ENCODE measurements at regions of chr7 and their contacts with region 1.

Region 1: GRCh38 chr7:92669616-92670165 is 79.5 kb upstream of the FAM133B start:
- DNase-seq: no peak
- ATAC-seq: no peak
- H3K4me3 Mint-ChIP-seq: peak overlapping the region; percentile 32
- H3K27ac Mint-ChIP-seq: peak overlapping the region; percentile 31
- H3K4me1 Mint-ChIP-seq: peaks cover 59% of the 10 kb centered on the region
- H3K27me3 Mint-ChIP-seq: no peaks in the 10 kb centered on the region

Region 2: GRCh38 chr7:91193141-91193540 is 1476.5 kb before region 1 on chr7:
- CTCF ChIA-PET with region 1: no interaction called
- POLR2A ChIA-PET with region 1: no interaction called
- DNase-seq: no peak
- ATAC-seq: no peak
- H3K4me3 Mint-ChIP-seq: no peak overlapping the region
- H3K27ac Mint-ChIP-seq: no peak overlapping the region
- H3K4me1 Mint-ChIP-seq: no peaks in the 10 kb centered on the region
- H3K27me3 Mint-ChIP-seq: no peaks in the 10 kb centered on the region

Region 3: GRCh38 chr7:92598310-92598981 is 71.2 kb before region 1 on chr7:
- CTCF ChIA-PET with region 1: no interaction called
- POLR2A ChIA-PET with region 1: no interaction called
- DNase-seq: no peak
- ATAC-seq: peak; percentile 48
- H3K4me3 Mint-ChIP-seq: no peak overlapping the region
- H3K27ac Mint-ChIP-seq: no peak overlapping the region
- H3K4me1 Mint-ChIP-seq: no peaks in the 10 kb centered on the region
- H3K27me3 Mint-ChIP-seq: peaks cover 4% of the 10 kb centered on the region

Region 4: DNA sequence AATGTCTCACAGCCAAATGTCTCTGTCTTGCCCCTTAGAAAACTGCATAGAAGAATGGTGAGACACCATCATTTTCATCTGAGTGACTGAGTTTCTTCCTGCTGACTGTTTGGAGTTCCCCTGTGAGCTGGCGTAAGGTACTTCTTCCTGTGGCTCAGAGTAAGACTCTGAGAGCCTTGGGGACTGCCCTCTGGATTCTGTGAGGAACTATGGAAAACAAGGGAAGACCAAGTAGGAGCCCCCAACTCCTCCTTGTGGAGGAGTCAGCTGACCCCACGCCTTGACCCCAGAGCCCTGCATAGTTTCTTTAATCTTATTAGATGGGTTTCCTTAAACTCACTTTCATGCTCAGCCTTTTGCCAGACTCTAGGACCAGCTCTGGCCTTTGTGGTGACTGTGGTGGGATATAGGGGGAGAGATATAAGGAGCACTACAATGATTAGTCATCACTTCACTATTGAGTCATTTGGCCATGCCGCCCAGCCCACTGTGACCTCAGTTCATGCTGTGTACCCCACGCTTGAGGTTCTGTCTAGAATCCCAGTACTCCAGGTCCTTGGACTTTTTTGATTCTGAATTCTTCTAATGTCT is 27.7 kb before region 1 on chr7:
- CTCF ChIA-PET with region 1: interaction called, 5 read pairs
- POLR2A ChIA-PET with region 1: interaction called, 11 read pairs
- DNase-seq: peak; percentile 73
- ATAC-seq: peak; percentile 74
- H3K4me3 Mint-ChIP-seq: peak overlapping the region; percentile 64
- H3K27ac Mint-ChIP-seq: peak overlapping the region; percentile 94
- H3K4me1 Mint-ChIP-seq: peaks cover 91% of the 10 kb centered on the region
- H3K27me3 Mint-ChIP-seq: no peaks in the 10 kb centered on the region

Region 5: GRCh38 chr7:92682903-92683539 is 13.3 kb after region 1 on chr7:
- CTCF ChIA-PET with region 1: interaction called, 5 read pairs
- POLR2A ChIA-PET with region 1: interaction called, 14 read pairs
- DNase-seq: no peak
- ATAC-seq: peak; percentile 52
- H3K4me3 Mint-ChIP-seq: peak overlapping the region; percentile 0
- H3K27ac Mint-ChIP-seq: peak overlapping the region; percentile 94
- H3K4me1 Mint-ChIP-seq: peaks cover 88% of the 10 kb centered on the region
- H3K27me3 Mint-ChIP-seq: no peaks in the 10 kb centered on the region

Region 6: GRCh38 chr7:92731335-92732063 is 61.8 kb after region 1 on chr7:
- CTCF ChIA-PET with region 1: no interaction called
- POLR2A ChIA-PET with region 1: no interaction called
- DNase-seq: no peak
- ATAC-seq: peak; percentile 43
- H3K4me3 Mint-ChIP-seq: no peak overlapping the region
- H3K27ac Mint-ChIP-seq: no peak overlapping the region
- H3K4me1 Mint-ChIP-seq: peaks cover 46% of the 10 kb centered on the region
- H3K27me3 Mint-ChIP-seq: no peaks in the 10 kb centered on the region

Region 7: GRCh38 chr7:93503071-93503470 is 833.4 kb after region 1 on chr7:
- CTCF ChIA-PET with region 1: no interaction called
- POLR2A ChIA-PET with region 1: no interaction called
- DNase-seq: no peak
- ATAC-seq: no peak
- H3K4me3 Mint-ChIP-seq: no peak overlapping the region
- H3K27ac Mint-ChIP-seq: no peak overlapping the region
- H3K4me1 Mint-ChIP-seq: no peaks in the 10 kb centered on the region
- H3K27me3 Mint-ChIP-seq: no peaks in the 10 kb centered on the region